ENCODE measurements at regions of chr13 and their contacts with region 1.

Region 1: DNA sequence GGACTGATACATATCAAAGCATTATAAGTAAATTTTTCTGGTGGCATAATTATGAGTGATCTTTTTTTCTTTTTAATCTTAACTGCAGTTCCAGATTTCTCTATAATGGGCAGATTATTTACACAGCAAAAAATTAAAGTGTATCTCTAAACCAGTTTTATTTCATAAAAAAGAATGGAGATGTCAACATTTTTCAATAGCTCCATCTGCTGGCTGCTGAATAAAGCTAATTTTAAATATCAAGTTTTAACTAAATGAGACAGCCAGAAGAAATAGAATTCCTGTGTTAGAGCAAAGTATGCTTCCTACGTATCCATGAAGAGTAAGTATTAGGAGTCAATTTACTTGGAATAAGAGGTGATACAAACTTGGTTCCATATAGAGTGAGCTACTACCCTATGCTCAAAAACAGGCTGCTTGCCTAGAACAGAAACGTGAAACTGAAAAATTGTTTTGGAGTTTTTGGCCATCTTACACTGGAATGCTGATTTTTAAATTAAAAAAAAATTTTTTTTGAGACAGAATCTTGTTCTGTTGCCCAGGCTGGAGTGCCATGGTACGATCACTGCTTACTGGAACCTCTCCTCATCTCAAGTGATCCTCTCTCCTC is 5.0 kb upstream of the PDS5B start:
- DNase-seq: no peak
- ATAC-seq: no peak
- H3K4me3 ChIP-seq: no peak overlapping the region
- H3K27ac ChIP-seq: no peak overlapping the region
- H3K4me1 ChIP-seq: peaks cover 4% of the 10 kb centered on the region; the same call in 1 of the 2 replicates
- H3K27me3 ChIP-seq: no peaks in the 10 kb centered on the region
- CTCF ChIP-seq: peak; percentile 40 to 63 (median 46); a peak in 5 of 6 replicates
- EP300 ChIP-seq: no peak
- POLR2A ChIP-seq: no peak
- RAD21 ChIP-seq: peak; percentile 60

Region 2: GRCh38 chr13:32019612-32020233 is 561.6 kb before region 1 on chr13:
- CTCF ChIA-PET with region 1: interaction called, 4 read pairs
- POLR2A ChIA-PET with region 1: no interaction called
- RAD21 ChIA-PET with region 1: no interaction called
- SMC1A ChIA-PET with region 1: no interaction called
- in situ Hi-C with region 1: no loop called
- intact Hi-C with region 1: loop called (anchors 5 kb)
- DNase-seq: peak; percentile 17
- ATAC-seq: peak; percentile 93
- H3K4me3 ChIP-seq: no peak overlapping the region
- H3K27ac ChIP-seq: no peak overlapping the region
- H3K4me1 ChIP-seq: no peaks in the 10 kb centered on the region; the same call in 1 of the 2 replicates
- H3K27me3 ChIP-seq: no peaks in the 10 kb centered on the region
- CTCF ChIP-seq: peak; percentile 63 to 77 (median 76)
- EP300 ChIP-seq: no peak
- POLR2A ChIP-seq: no peak
- RAD21 ChIP-seq: peak; percentile 89

Region 3: DNA sequence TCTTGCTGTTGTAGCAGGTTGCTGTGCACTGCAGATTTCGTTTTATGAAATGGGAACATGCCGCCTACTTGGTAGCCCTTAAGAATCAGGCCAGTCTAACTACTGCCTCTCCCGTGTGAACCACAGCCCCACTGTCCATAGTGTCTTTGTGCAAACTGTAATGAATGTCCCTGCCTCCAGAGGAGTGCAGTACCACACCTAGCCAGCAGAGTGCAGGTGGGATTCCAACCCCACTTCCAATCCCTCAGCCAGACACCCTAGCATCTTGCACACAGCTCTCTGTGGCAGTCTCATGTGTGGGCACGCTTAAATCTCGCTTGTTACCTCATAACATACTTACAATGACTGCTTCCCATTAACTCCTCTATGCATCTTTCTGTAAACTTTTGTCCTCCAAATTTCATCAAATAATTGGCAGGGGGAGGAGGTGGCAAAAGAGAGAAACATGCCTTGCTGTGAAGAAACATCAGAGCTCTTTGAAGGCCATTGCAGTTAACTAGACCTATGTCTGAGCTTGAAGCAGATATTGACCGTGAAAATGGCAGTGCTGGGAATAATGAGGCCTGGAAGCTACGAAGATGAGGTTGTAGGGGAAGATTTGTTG is 313.3 kb before region 1 on chr13:
- CTCF ChIA-PET with region 1: interaction called, 18 read pairs
- POLR2A ChIA-PET with region 1: no interaction called
- RAD21 ChIA-PET with region 1: interaction called, 9 read pairs
- SMC1A ChIA-PET with region 1: interaction called, 4 read pairs
- in situ Hi-C with region 1: no loop called
- intact Hi-C with region 1: no loop called
- DNase-seq: no peak
- ATAC-seq: peak; percentile 100
- H3K4me3 ChIP-seq: no peak overlapping the region
- H3K27ac ChIP-seq: no peak overlapping the region
- H3K4me1 ChIP-seq: no peaks in the 10 kb centered on the region
- H3K27me3 ChIP-seq: no peaks in the 10 kb centered on the region
- CTCF ChIP-seq: peak; percentile 81 to 95 (median 92)
- EP300 ChIP-seq: no peak
- POLR2A ChIP-seq: no peak
- RAD21 ChIP-seq: peak; percentile 58

Region 4: DNA sequence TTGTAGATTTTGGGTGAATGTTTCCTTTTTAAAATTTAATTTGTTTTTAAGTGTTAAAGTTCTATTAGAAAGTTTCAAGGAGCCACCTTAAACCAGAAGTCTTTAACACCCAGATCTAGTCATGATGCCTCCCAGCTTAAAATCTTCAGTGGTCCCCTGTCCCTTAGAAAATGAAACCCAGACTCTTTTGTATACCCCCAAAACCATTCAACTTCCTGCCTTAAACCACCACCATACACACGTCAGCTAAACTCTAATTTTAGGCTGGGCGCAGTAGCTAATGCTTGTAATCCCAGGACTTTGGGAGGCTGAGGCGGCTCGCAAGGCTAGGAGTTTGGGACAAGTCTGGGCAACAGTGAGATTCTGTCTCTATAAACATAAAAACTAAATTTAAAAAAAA is 191.2 kb before region 1 on chr13:
- CTCF ChIA-PET with region 1: interaction called, 11 read pairs
- POLR2A ChIA-PET with region 1: no interaction called
- RAD21 ChIA-PET with region 1: interaction called, 4 read pairs
- SMC1A ChIA-PET with region 1: interaction called, 5 read pairs
- in situ Hi-C with region 1: no loop called
- intact Hi-C with region 1: no loop called
- DNase-seq: no peak
- ATAC-seq: peak; percentile 86
- H3K4me3 ChIP-seq: no peak overlapping the region
- H3K27ac ChIP-seq: peak overlapping the region; percentile 26; the same call in 1 of the 2 replicates
- H3K4me1 ChIP-seq: no peaks in the 10 kb centered on the region; the same call in 1 of the 2 replicates
- H3K27me3 ChIP-seq: no peaks in the 10 kb centered on the region
- CTCF ChIP-seq: no peak
- EP300 ChIP-seq: no peak
- POLR2A ChIP-seq: no peak
- RAD21 ChIP-seq: no peak

Region 5: GRCh38 chr13:32472194-32472621 is 109.1 kb before region 1 on chr13:
- CTCF ChIA-PET with region 1: interaction called, 47 read pairs
- POLR2A ChIA-PET with region 1: interaction called, 4 read pairs
- RAD21 ChIA-PET with region 1: interaction called, 26 read pairs
- SMC1A ChIA-PET with region 1: interaction called, 19 read pairs
- in situ Hi-C with region 1: no loop called
- intact Hi-C with region 1: loop called (anchors 1 kb)
- DNase-seq: peak; percentile 56
- ATAC-seq: peak; percentile 89
- H3K4me3 ChIP-seq: no peak overlapping the region
- H3K27ac ChIP-seq: peak overlapping the region; percentile 84
- H3K4me1 ChIP-seq: peaks cover 16% of the 10 kb centered on the region
- H3K27me3 ChIP-seq: no peaks in the 10 kb centered on the region
- CTCF ChIP-seq: no peak
- EP300 ChIP-seq: no peak
- POLR2A ChIP-seq: no peak
- RAD21 ChIP-seq: no peak

Region 6: GRCh38 chr13:32594157-32594738 is 13.0 kb after region 1 on chr13:
- CTCF ChIA-PET with region 1: interaction called, 10 read pairs
- POLR2A ChIA-PET with region 1: no interaction called
- RAD21 ChIA-PET with region 1: interaction called, 4 read pairs
- SMC1A ChIA-PET with region 1: interaction called, 3 read pairs
- in situ Hi-C with region 1: no loop called
- intact Hi-C with region 1: no loop called
- DNase-seq: no peak
- ATAC-seq: no peak
- H3K4me3 ChIP-seq: no peak overlapping the region
- H3K27ac ChIP-seq: no peak overlapping the region
- H3K4me1 ChIP-seq: no peaks in the 10 kb centered on the region
- H3K27me3 ChIP-seq: no peaks in the 10 kb centered on the region
- CTCF ChIP-seq: no peak
- EP300 ChIP-seq: no peak
- POLR2A ChIP-seq: no peak
- RAD21 ChIP-seq: no peak

Region 7: DNA sequence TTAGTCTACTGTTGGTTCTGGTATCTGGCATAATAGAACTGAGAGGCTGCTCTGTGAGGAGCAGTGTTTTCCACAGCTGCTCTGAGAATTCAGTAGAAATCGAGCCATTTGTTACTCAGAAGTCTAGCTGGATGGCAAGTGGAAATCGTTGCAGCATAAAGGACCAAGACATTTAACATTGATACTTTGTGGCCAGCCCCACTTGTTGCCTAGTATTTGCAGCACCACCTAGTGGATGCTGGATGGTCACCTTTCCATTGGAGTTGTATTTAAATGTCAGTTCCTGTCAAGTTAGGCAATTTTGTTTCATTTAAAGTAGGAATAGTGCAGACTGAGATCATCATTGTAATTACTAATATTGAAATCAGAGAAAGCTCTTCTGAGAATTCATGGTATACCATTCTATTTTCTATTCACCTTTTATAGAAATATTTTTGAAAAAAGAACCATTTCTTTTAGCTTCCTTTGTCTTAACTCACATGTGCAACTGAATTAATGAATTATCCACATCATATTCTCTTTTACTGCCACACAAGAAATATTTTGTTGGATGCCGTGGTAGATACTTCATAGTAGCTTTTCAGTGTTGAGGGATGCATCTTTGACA is 69.5 kb after region 1 on chr13:
- CTCF ChIA-PET with region 1: interaction called, 25 read pairs
- POLR2A ChIA-PET with region 1: no interaction called
- RAD21 ChIA-PET with region 1: interaction called, 38 read pairs
- SMC1A ChIA-PET with region 1: interaction called, 12 read pairs
- in situ Hi-C with region 1: no loop called
- intact Hi-C with region 1: loop called (anchors 1 kb)
- DNase-seq: peak; percentile 30
- ATAC-seq: peak; percentile 84
- H3K4me3 ChIP-seq: no peak overlapping the region
- H3K27ac ChIP-seq: no peak overlapping the region; the same call in 1 of the 2 replicates
- H3K4me1 ChIP-seq: peaks cover 20% of the 10 kb centered on the region
- H3K27me3 ChIP-seq: no peaks in the 10 kb centered on the region
- CTCF ChIP-seq: peak; percentile 78 to 88 (median 83)
- EP300 ChIP-seq: no peak
- POLR2A ChIP-seq: no peak
- RAD21 ChIP-seq: peak; percentile 71